ENCODE measurements at regions of chr20 and their contacts with region 1.

Region 1: DNA sequence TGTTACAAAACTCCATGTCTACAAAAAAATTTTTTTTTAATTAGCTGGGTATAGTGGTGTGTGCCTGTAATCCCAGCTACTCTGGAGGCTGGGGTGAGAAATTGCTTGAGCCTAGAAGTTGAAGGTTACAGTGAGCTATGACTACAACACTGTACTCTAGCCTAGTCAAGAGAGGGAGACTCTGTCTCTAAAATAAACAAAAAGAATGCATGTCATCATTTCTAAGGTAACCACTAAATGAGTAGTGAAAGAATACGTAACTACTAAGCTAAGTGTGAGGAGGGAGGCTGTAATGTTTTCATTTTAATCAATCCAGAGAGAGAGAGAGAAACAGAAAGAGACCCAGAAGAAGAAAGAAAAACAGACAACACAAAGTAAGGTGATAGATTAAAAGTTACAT is 9.9 kb downstream of the SYCP2 start:
- DNase-seq: no peak
- ATAC-seq: no peak
- H3K4me3 ChIP-seq: no peak overlapping the region
- H3K4me3 Mint-ChIP-seq: no peak overlapping the region
- H3K27ac ChIP-seq: no peak overlapping the region
- H3K27ac Mint-ChIP-seq: no peak overlapping the region
- H3K4me1 ChIP-seq: no peaks in the 10 kb centered on the region
- H3K4me1 Mint-ChIP-seq: no peaks in the 10 kb centered on the region
- H3K27me3 ChIP-seq: no peaks in the 10 kb centered on the region
- H3K27me3 Mint-ChIP-seq: peaks cover 11% of the 10 kb centered on the region
- CTCF ChIP-seq: no peak

Region 2: DNA sequence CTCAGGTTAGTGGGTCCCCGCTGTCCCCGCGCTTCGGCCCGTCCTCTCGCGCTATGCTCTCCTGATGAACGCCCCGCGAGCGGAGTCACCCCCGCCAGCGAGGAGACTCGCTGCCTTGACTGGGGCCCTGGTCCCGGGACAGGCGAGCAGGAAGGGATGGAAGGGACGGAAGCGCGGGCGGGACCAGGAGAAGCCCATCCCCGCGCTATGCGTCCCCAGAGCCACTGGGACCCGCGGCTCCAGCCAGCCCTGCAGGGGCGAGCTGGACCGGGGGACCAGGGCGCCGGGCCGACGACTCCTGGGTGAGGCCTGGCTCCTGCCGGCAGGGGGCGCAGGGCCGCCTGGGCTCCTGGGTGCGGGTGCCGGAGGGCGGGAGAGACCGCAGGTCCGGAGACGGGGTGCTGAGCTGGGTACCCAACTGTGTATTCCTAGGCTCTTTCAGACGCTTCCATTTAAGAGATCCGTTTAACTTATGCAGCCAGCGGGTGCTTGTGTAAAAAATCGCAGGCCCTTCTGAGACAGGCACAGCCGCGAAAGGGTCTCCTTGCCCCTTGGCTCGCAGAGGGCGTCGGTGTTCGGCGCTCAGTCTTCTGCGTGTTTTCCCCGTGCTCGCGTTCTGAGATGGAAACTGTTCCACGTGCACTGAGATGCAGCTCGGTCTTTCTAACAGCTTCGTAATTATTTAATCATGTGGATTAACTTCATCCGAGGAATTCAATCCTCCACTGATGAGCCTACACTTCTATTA is 10.5 kb after region 1 on chr20:
- CTCF ChIA-PET with region 1: interaction called, 11 read pairs
- POLR2A ChIA-PET with region 1: interaction called, 3 read pairs
- intact Hi-C with region 1: no loop called
- DNase-seq: peak; percentile 60 to 87 (median 79)
- ATAC-seq: peak; percentile 73
- H3K4me3 ChIP-seq: peak overlapping the region; percentile 65 to 85
- H3K4me3 Mint-ChIP-seq: peak overlapping the region; percentile 79
- H3K27ac ChIP-seq: peak overlapping the region; percentile 32 to 68
- H3K27ac Mint-ChIP-seq: peak overlapping the region; percentile 57
- H3K4me1 ChIP-seq: peaks cover 12% of the 10 kb centered on the region
- H3K4me1 Mint-ChIP-seq: peaks cover 26% of the 10 kb centered on the region
- H3K27me3 ChIP-seq: no peaks in the 10 kb centered on the region
- H3K27me3 Mint-ChIP-seq: no peaks in the 10 kb centered on the region
- CTCF ChIP-seq: peak; percentile 94

Measured in CD8-positive, alpha-beta T cell (primary cell).